ENCODE measurements at regions of chr15 and their contacts with region 1.

Region 1: GRCh38 chr15:81400640-81401236 is 26.7 kb upstream of the TMC3 start:
- DNase-seq: no peak
- ATAC-seq: peak; percentile 58
- H3K4me3 Mint-ChIP-seq: no peak overlapping the region
- H3K27ac Mint-ChIP-seq: no peak overlapping the region
- H3K4me1 Mint-ChIP-seq: no peaks in the 10 kb centered on the region
- H3K27me3 Mint-ChIP-seq: no peaks in the 10 kb centered on the region
- CTCF ChIP-seq: peak; percentile 31

Region 2: DNA sequence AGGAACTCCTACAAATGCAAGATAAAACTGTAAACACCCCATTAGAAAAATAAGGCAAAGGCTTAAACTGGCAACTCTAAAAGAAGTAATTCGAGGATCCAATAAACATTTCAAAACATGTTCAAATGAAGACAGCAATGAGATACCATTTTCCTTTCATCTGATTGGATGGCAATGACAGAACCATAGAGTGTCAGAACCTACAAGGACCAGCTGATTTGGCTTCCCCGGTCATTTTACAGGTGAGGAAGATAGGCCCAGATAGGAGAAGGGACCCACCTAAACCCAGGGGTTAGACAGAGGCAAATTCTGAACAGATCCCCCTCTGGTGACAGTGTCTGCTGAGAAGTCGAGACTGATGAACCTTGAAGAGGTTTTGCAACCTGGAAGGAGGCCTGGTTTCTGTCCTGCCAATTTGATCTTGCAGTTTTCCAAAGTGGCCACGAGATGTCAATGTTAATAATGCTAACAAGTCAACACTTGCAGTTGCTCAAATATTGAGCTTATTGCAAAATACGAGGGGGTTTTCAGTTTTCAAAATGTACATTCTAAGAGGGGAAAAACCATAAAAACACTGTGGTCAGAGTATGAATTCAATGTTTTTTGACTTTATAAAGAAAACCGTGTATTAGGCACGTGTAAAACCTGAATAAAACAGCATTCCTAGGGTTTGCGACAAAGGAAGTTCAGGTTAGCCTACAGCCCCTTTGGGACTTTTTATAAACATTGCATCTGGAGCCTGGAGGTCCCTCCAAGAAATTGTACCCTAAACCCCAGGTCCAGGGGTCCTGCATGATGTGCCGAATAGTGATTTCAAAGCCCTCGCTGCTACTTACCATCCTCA is 245.1 kb before region 1 on chr15:
- CTCF ChIA-PET with region 1: interaction called, 10 read pairs
- POLR2A ChIA-PET with region 1: no interaction called
- intact Hi-C with region 1: loop called (anchors 1 kb)
- DNase-seq: no peak
- ATAC-seq: peak; percentile 31
- H3K4me3 Mint-ChIP-seq: no peak overlapping the region
- H3K27ac Mint-ChIP-seq: no peak overlapping the region
- H3K4me1 Mint-ChIP-seq: peaks cover 3% of the 10 kb centered on the region
- H3K27me3 Mint-ChIP-seq: peaks cover 4% of the 10 kb centered on the region
- CTCF ChIP-seq: no peak

Region 3: DNA sequence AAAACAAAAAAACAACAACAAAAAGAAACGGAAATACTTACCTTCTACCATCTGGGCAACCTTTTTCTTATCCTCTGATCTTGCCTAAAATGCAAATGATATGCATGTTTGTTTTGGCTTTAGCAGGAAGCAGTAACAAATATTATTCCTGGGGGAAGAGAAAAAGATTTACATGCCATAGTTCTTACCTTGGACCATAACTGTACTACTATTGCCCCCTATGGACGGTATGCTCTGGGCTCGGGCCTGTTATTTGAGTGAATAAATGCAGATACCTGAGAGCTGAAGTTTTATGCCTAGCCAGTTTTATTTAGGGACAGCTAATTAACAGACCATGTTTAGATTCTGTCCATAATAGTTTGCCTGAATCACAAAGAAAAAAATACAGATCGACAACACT is 64.2 kb before region 1 on chr15:
- CTCF ChIA-PET with region 1: interaction called, 5 read pairs
- POLR2A ChIA-PET with region 1: no interaction called
- intact Hi-C with region 1: loop called (anchors 1 kb)
- DNase-seq: no peak
- ATAC-seq: peak; percentile 61
- H3K4me3 Mint-ChIP-seq: no peak overlapping the region
- H3K27ac Mint-ChIP-seq: no peak overlapping the region
- H3K4me1 Mint-ChIP-seq: peaks cover 12% of the 10 kb centered on the region
- H3K27me3 Mint-ChIP-seq: no peaks in the 10 kb centered on the region
- CTCF ChIP-seq: no peak

Region 4: GRCh38 chr15:81363718-81364500 is 36.8 kb before region 1 on chr15:
- CTCF ChIA-PET with region 1: no interaction called
- POLR2A ChIA-PET with region 1: no interaction called
- intact Hi-C with region 1: no loop called
- DNase-seq: no peak
- ATAC-seq: no peak
- H3K4me3 Mint-ChIP-seq: no peak overlapping the region
- H3K27ac Mint-ChIP-seq: no peak overlapping the region
- H3K4me1 Mint-ChIP-seq: no peaks in the 10 kb centered on the region
- H3K27me3 Mint-ChIP-seq: peaks cover 4% of the 10 kb centered on the region
- CTCF ChIP-seq: no peak

Region 5: DNA sequence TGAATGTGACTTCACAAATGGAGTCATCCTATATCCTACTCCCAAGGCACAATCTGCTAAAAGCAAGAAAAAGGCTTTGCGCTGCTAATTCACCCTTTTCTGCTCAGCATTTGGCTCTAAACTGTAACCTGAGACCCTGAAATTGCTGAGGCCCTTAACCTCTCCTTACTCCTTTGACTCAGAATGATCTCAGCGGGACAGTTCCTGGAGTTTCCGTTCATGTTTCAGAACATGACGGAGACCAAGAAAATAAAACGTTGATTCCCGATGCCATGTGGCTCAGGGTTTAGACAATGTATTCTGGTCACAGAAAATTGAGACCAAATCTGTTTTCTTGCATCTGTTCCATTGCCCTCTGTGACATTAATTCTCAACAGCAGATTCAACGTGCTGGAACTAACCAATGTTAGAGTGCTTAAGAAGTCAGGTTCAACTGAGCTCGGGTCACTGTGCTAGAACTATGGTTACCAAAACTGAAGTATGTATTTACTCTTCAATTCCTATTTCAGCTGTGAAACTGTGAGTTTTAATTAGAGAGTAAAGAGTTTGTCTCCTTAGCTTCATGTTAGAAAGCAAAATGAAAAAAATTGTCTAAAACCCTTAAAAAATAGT is 18.7 kb after region 1 on chr15:
- CTCF ChIA-PET with region 1: no interaction called
- POLR2A ChIA-PET with region 1: no interaction called
- intact Hi-C with region 1: no loop called
- DNase-seq: no peak
- ATAC-seq: no peak
- H3K4me3 Mint-ChIP-seq: no peak overlapping the region
- H3K27ac Mint-ChIP-seq: no peak overlapping the region
- H3K4me1 Mint-ChIP-seq: no peaks in the 10 kb centered on the region
- H3K27me3 Mint-ChIP-seq: peaks cover 7% of the 10 kb centered on the region
- CTCF ChIP-seq: no peak

Measured in activated B cell treated with CpG ODN at 0.5 μM for 24 hours (primary cell).